ENCODE measurements at regions of chr7 and their contacts with region 1.

Region 1: DNA sequence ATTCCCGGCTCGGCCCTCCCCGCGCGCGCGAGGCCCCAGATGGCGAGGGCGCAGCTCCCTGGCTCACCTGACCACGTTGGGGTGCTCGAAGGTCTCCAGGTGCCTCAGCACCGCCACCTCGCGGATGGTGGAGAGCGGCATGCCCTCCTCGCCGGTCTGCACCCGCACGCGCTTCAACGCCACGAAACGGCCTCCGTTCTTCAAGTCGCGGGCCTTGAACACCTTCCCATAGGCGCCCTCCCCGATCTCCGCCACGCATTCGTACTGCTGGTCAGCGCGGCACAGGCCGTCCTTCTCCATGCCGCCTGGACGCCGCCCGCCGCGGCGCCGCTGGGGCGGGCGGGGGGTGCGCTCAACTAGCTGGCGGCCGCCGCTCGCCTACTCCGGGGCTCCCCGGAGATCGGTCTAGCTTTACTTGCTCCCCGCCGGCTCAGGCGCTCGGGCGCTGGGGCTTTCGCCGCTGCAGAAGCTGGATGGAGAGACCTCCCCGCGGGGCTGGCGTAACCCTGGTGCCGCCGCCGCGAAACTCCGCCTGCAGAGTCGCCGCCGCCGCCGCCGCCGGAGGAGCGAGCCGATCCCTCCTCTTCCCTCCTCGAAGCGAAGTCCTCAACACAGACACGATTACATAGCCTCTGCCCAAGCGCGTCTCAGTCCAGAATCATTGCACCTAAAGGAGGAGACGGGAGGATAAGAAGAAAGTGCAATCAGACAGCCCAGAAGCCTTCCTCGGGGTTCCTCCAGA is 3.2 kb downstream of the CDK6 start:
- DNase-seq: peak; percentile 94
- H3K4me3 Mint-ChIP-seq: peak overlapping the region; percentile 97
- H3K27ac Mint-ChIP-seq: peak overlapping the region; percentile 98
- H3K4me1 Mint-ChIP-seq: peaks cover 43% of the 10 kb centered on the region
- H3K27me3 Mint-ChIP-seq: no peaks in the 10 kb centered on the region

Region 2: DNA sequence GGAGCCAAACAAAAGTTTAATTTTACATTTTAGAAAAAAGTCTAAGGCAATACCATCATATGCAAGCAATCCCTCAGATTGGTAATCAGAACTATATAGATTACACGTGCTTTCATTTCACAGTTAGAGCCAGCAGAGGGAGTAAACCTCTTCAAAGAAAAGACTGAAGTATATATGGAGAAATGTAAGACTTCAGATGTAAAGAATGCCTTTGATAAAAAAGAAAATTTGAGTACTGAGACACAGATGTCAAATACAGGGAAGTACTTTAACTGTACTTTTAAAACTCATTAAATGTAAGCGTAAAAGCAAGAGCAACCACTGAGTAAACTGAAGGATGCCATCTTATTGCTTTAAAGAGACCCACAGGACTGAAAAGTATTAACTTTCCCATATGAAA is 141.6 kb before region 1 on chr7:
- CTCF ChIA-PET with region 1: interaction called, 11 read pairs
- POLR2A ChIA-PET with region 1: no interaction called
- intact Hi-C with region 1: loop called (anchors 1 kb)
- DNase-seq: no peak
- H3K4me3 Mint-ChIP-seq: no peak overlapping the region
- H3K27ac Mint-ChIP-seq: peak overlapping the region; percentile 83
- H3K4me1 Mint-ChIP-seq: peaks cover 60% of the 10 kb centered on the region
- H3K27me3 Mint-ChIP-seq: no peaks in the 10 kb centered on the region

Region 3: DNA sequence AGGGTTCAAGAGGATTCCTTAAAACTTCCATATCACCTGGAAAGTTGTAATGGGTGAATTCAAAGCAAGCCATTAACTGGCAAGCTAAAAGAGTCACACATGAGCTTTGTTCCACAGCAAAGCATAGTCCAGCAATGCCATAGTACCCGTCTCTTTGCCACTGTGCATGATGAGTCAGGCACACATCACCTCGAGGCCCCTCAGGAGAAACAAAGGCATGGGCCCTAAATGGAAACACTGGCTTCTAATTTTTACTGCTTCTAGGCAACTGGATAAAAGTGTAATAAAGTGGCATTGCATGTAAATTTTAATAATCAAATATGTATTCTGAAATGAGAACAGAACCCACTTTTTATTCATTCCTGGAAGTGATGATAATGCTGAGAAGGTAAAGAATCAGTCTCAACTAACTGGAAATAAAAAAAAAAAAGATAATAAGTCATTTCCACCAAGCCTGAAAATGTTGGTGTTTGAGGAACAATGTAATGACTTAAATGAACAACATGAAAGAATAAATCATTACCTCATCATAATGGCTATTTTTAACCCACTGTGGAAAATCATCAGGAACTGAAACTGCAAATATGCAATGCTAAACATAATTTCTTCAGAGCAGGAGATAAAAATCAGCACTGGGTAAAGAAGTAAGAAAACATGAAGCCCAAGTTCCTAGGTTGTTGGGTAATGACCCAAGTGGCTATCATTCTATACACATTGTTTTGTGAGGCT is 101.7 kb before region 1 on chr7:
- CTCF ChIA-PET with region 1: interaction called, 5 read pairs
- POLR2A ChIA-PET with region 1: interaction called, 10 read pairs
- intact Hi-C with region 1: loop called (anchors 1 kb)
- DNase-seq: peak; percentile 71
- H3K4me3 Mint-ChIP-seq: peak overlapping the region; percentile 10
- H3K27ac Mint-ChIP-seq: peak overlapping the region; percentile 96
- H3K4me1 Mint-ChIP-seq: peaks cover 71% of the 10 kb centered on the region
- H3K27me3 Mint-ChIP-seq: no peaks in the 10 kb centered on the region

Region 4: GRCh38 chr7:92809397-92810241 is 23.6 kb before region 1 on chr7:
- CTCF ChIA-PET with region 1: interaction called, 27 read pairs
- POLR2A ChIA-PET with region 1: interaction called, 23 read pairs
- intact Hi-C with region 1: loop called (anchors 1 kb)
- DNase-seq: peak; percentile 83
- H3K4me3 Mint-ChIP-seq: peak overlapping the region; percentile 39
- H3K27ac Mint-ChIP-seq: peak overlapping the region; percentile 89
- H3K4me1 Mint-ChIP-seq: peaks cover 73% of the 10 kb centered on the region
- H3K27me3 Mint-ChIP-seq: no peaks in the 10 kb centered on the region

Region 5: DNA sequence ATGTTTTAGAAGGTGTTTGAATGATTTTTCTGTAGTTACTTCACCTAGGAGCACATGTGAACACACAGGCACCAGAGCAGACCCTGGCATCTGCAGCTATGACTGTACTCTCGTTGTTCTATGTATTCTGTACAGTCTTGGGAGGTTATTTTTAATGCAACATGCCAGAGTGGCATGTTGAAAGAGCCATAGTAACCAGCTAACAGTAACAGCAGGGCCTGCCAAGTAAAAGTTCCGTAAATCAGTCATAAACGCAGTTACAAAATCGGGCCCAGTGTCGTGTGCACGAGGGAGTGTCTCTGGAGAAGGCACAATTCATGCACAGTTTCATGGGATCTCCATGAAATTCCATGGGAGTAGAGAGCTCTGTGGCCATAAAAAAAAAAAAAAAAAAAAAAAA is 111.4 kb after region 1 on chr7:
- CTCF ChIA-PET with region 1: no interaction called
- POLR2A ChIA-PET with region 1: no interaction called
- intact Hi-C with region 1: no loop called
- DNase-seq: no peak
- H3K4me3 Mint-ChIP-seq: no peak overlapping the region
- H3K27ac Mint-ChIP-seq: no peak overlapping the region
- H3K4me1 Mint-ChIP-seq: peaks cover 4% of the 10 kb centered on the region
- H3K27me3 Mint-ChIP-seq: no peaks in the 10 kb centered on the region

Region 6: GRCh38 chr7:93036807-93037206 is 203.6 kb after region 1 on chr7:
- CTCF ChIA-PET with region 1: interaction called, 4 read pairs
- POLR2A ChIA-PET with region 1: interaction called, 10 read pairs
- intact Hi-C with region 1: loop called (anchors 2 kb)
- DNase-seq: peak; percentile 64
- H3K4me3 Mint-ChIP-seq: no peak overlapping the region
- H3K27ac Mint-ChIP-seq: peak overlapping the region; percentile 53
- H3K4me1 Mint-ChIP-seq: peaks cover 22% of the 10 kb centered on the region
- H3K27me3 Mint-ChIP-seq: no peaks in the 10 kb centered on the region

Region 7: GRCh38 chr7:94004024-94004951 is 1171.1 kb after region 1 on chr7 and contains the start of gene BET1:
- CTCF ChIA-PET with region 1: no interaction called
- POLR2A ChIA-PET with region 1: no interaction called
- intact Hi-C with region 1: loop called (anchors 5 kb)
- DNase-seq: peak; percentile 94
- H3K4me3 Mint-ChIP-seq: peak within 1 kb of the TSS; percentile 95
- H3K27ac Mint-ChIP-seq: peak within 1 kb of the TSS; percentile 92
- H3K4me1 Mint-ChIP-seq: peaks cover 37% of the 10 kb centered on the region
- H3K27me3 Mint-ChIP-seq: peaks cover 8% of the 10 kb centered on the region
- total RNA-seq, gene BET1: 19.3 to 20.5 TPM

Measured in activated CD4-positive, alpha-beta memory T cell treated with anti-CD3 and anti-CD28 coated beads for 36 hours (primary cell).